ENCODE measurements at regions of chr13 and their contacts with region 1.

Region 1: DNA sequence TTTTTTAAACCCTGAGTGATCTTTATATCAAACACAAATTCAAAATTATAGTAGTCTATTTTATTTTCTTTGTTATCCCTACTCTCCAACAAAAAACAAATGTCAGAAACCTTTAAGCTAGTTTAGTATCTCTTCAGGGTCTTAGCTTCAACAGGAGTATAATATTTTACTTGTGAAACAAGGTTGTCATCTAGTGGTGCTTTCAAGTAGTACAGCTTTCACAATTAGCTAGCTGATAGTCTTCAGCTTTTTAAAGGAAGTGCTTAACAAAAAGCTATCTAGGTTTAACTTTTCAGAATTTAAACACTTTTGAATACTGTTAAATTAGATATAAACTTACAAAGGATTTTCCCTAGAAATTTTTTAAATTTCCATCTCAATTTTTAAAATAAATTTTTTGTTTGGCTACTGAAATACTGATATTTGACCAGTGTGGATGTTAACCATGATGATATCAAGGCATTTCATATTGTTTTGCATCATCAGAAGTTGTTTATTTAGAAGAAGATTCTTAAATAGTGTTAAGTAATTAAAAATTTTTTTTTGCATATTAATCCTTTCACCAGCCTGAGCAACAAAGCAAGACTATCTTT is 34.2 kb downstream of the TDRD3 start:
- DNase-seq: no peak
- H3K4me3 ChIP-seq: no peak overlapping the region
- H3K27ac ChIP-seq: no peak overlapping the region
- H3K4me1 ChIP-seq: no peaks in the 10 kb centered on the region
- H3K27me3 ChIP-seq: no peaks in the 10 kb centered on the region
- CTCF ChIP-seq: peak; percentile 85 to 99 (median 94)
- POLR2A ChIP-seq: no peak

Region 2: DNA sequence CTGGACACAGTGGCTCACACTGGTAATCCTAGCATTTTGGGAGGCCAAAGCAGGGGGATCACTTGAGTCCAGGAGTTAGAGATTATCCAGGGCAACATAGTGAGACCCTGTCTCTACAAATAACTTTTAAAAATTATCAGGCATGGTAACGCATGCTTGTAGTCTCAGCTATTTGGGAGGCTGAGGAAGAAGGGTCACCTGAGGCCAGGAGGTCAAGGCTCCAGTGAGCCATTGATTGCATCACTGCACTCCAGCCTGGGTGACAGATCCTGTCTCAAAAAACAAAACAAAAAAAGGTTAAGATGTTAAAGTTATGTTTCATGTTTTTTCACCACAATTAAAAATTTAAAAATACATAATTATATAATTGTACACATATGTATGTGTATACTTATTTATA is 248.3 kb before region 1 on chr13:
- intact Hi-C with region 1: no loop called
- DNase-seq: no peak
- H3K4me3 ChIP-seq: no peak overlapping the region
- H3K27ac ChIP-seq: no peak overlapping the region
- H3K4me1 ChIP-seq: no peaks in the 10 kb centered on the region
- H3K27me3 ChIP-seq: no peaks in the 10 kb centered on the region
- CTCF ChIP-seq: no peak
- POLR2A ChIP-seq: no peak

Region 3: DNA sequence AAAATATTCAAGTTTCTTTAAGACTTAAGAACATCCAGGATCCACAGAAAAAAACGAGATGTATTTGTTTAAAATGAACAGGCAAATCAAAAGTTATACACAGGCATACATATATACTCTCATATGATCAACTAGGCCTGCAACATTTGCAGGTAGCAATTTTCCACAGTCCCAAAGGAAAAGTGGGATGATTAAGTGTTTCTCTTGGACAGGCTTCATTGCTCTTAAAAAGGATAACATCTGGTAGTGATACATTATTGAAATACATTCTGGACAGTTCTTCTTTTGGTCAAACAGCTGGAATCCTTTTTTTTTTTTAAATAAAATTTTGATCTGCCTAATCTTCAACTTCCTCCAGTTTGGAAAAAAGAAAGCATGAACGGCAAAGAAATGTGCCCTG is 149.0 kb before region 1 on chr13:
- intact Hi-C with region 1: no loop called
- DNase-seq: no peak
- H3K4me3 ChIP-seq: no peak overlapping the region
- H3K27ac ChIP-seq: no peak overlapping the region
- H3K4me1 ChIP-seq: no peaks in the 10 kb centered on the region
- H3K27me3 ChIP-seq: no peaks in the 10 kb centered on the region
- CTCF ChIP-seq: no peak
- POLR2A ChIP-seq: no peak

Region 4: GRCh38 chr13:60335531-60335930 is 95.7 kb before region 1 on chr13:
- intact Hi-C with region 1: loop called in 1 of 2 experiments (anchors 10 kb)
- DNase-seq: no peak
- H3K4me3 ChIP-seq: no peak overlapping the region
- H3K27ac ChIP-seq: no peak overlapping the region
- H3K4me1 ChIP-seq: peaks cover 0 to 4% of the 10 kb centered on the region in 2 donors
- H3K27me3 ChIP-seq: no peaks in the 10 kb centered on the region
- CTCF ChIP-seq: peak; percentile 29 to 66 (median 56)
- POLR2A ChIP-seq: no peak

Region 5: DNA sequence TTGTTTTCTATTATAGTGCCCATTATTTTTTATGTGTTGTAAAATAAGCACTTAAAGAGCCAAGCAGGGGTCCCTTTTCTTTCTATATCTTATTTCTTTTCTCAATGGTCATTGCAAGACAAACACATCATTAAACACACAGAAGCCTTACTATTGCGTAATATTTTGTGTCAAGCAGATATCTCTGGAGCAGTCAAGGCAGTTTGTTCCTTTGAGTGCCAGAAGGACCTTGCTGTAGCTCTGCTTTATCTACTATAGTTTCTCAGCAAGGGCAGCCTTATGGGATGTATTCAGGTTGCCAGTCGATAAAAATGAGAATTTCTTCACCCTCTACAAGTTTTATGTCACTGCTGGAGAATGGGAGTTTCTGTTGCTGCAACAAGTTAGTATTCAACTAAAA is 285.1 kb after region 1 on chr13:
- intact Hi-C with region 1: no loop called
- DNase-seq: no peak
- H3K4me3 ChIP-seq: no peak overlapping the region
- H3K27ac ChIP-seq: no peak overlapping the region
- H3K4me1 ChIP-seq: no peaks in the 10 kb centered on the region
- H3K27me3 ChIP-seq: no peaks in the 10 kb centered on the region
- CTCF ChIP-seq: no peak
- POLR2A ChIP-seq: no peak